Head of caudate nucleus (tissue), 42 donors: ENCODE measurements at regions of chr16 and their contacts with region 1.

Region 1: GRCh38 chr16:50371936-50372595 is 3.3 kb upstream of the BRD7 start:
- DNase-seq: peak; percentile 38 to 88 (median 74)

Region 2: DNA sequence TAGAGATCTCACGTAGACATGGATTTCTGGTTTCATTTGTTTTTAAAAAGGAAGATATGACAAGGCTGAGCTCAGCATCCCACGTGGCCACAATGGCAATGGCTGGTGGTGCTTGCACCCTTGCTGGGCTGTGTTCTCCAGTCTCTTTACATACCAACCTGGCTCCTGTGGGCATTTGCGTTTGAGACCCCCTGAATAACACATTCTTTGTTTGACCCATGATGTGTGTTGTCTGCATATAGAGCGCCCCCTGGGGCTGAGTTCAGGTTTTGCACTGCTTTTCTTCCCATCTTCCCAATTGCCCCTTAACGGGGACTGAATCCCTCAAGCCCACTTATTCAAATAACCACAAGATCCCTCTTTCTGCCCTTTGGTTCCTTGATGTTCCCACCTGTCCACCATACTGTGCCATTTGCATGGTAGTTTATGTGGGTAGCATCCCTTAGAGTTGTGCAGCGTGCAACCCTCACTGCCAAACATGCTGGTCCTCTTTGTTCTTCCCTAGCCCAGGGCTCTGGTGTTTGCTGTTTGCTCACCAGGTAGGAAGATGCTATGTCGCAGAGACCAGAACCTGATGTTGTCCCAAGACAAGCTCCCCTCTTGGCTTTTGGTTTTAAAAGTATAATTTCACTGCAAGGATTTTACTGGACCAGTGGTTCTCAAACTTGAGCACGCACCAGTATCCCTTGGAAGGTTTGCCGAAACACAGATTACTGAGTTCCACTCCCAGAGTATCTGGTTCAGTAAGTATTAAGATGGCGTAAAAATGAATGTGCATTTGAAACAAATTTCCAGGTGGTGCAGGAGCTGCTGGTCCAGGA is 137.7 kb after region 1 on chr16:
- intact Hi-C with region 1: loop called (anchors 10 kb)
- DNase-seq: peak in 37 of 42 donors; percentile 18 to 83 (median 50)

Region 3: DNA sequence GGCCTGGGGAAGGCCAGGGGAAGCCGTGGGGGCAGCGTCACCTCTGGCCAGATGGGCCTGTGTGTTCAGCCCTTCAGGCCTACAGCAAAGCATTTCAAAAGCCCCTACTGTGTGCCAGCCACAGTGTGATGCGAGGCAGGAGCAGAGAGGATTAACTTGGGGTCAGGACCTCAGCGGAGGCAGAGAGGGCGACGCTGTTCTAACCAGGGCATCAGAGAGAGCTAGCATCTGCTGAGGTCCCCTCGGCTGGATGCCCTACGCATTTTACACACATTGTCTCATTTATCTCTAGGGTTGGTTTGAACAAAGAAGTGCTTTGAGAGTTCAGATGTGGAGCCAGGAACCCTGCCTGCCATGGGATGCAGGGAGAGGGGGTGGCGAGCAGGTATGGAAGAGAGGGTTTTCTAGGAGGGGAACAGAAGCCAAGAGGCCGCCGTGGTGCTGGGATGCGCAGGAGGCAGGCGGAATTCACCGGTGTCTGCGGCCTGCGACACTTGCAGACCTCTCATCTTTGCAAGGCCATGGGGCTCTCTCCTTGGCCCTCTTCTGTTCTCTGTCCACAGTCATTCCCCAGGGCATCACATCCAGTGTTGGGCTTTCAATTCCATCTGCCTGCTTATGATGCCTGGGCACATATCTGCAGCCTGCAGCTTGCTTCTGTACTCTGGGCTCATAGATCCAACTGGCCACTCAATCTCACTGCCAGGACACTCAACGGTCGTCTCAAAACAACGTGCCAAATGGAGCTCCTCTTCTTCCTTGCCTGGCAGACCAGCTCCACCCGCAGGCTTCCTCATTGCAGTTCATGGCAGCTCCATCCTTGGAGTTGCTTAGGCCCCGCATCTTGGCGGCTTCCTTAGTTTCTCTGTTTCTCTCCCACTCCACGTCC is 168.0 kb after region 1 on chr16:
- intact Hi-C with region 1: no loop called
- DNase-seq: peak in 34 of 42 donors; percentile 28 to 82 (median 58)

Region 4: GRCh38 chr16:50665128-50665878 is 293.2 kb after region 1 on chr16:
- intact Hi-C with region 1: loop called (anchors 5 kb)
- DNase-seq: peak; percentile 48 to 95 (median 87)